Aorta (tissue), 5 donors: ENCODE measurements at regions of chr2 and their contacts with region 1.

Region 1: DNA sequence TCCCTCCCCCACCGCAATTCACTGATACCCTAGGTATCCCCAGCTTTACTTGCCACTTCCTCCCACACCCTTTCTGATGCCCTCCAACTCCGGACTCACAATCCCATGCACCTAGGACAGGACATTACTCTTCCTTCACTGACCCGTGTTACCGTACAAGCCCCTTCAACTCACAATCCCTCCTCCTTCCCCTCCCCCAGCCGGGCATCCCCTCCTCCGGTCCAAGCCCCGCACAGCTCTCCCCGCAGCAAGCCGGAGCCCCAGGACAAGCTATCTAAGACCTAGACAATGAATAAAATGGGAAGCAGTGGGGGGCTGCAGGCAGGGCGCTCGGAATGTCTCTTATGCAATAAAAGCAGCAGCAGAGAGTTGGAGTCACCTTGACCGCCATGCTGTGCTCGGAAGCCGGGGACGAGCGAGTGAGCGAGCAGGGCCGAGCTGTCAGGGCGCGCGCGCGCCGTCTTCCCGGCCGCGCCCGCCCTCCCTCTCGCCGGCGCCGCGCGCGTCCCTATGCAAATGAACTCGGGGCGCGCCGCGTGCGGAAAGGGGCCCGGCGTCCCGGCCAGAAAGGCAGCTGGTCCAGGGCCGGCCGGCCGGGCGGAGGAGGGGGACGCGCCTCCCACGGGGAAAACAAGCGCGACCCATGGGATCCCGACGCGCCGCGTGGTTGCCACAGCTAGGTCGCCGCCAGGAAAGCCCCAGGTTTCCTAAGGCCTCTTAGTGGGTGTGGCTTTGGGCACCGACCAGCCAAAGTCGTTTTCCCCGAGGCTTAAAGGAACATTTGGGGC is at the start of gene SLC25A12:
- DNase-seq: peak; percentile 87 to 94
- ATAC-seq: peak; percentile 97
- H3K4me3 ChIP-seq: peak within 1 kb of the TSS; percentile 75 to 78
- H3K27ac ChIP-seq: peak within 1 kb of the TSS in 1 of 2 donors; percentile 53
- H3K4me1 ChIP-seq: no peaks in the 10 kb centered on the region
- H3K27me3 ChIP-seq: no peaks in the 10 kb centered on the region
- total RNA-seq, gene SLC25A12: 24.1 to 34.6 TPM

Region 2: DNA sequence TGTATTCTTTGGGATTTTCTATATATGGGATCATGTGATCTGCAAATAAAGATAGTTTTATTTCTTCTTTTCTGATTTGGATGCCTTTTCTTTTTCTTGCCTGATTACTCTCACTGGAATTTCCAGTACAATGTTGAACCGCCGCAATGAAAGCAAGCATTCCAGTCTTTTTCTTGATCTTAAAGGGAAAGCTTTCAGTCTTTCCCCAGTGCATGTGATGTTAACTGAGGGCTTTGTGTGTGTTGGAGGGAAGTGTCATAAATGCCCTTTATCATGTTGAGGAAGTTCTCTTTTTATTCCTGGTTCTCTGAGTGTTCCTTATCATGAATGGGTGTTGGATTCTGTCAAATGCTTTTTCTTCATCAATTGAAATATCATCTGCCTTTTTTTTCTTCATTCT is 388.6 kb before region 1 on chr2:
- intact Hi-C with region 1: no loop called
- DNase-seq: no peak
- ATAC-seq: no peak
- H3K4me3 ChIP-seq: no peak overlapping the region
- H3K27ac ChIP-seq: no peak overlapping the region
- H3K4me1 ChIP-seq: no peaks in the 10 kb centered on the region
- H3K27me3 ChIP-seq: no peaks in the 10 kb centered on the region

Region 3: DNA sequence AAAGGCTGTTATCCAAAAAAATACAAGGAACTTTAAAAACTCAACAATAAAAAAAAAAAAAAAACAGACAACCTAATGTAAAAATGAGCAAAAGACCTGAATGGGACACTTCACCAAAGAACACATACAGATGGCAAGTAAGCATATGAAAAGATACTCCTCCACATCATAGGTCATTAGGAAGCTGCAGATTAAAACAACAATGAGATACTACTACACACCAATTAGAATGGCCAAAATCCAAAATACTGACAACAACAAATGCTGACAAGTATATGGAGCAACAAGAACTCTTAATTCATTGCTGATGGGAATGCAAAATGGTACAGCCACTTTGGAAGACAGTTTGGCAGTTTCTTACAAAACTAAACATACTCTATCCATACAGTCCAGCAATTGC is 122.6 kb before region 1 on chr2:
- intact Hi-C with region 1: no loop called
- DNase-seq: no peak
- ATAC-seq: no peak
- H3K4me3 ChIP-seq: no peak overlapping the region
- H3K27ac ChIP-seq: no peak overlapping the region
- H3K4me1 ChIP-seq: no peaks in the 10 kb centered on the region
- H3K27me3 ChIP-seq: no peaks in the 10 kb centered on the region

Region 4: GRCh38 chr2:171922230-171923022 is 28.4 kb after region 1 on chr2 and contains the start of gene HAT1:
- intact Hi-C with region 1: loop called in 1 of 2 experiments (anchors 2 kb)
- DNase-seq: peak; percentile 98
- ATAC-seq: peak; percentile 100
- H3K4me3 ChIP-seq: peak within 1 kb of the TSS; percentile 58 to 67
- H3K27ac ChIP-seq: peak within 1 kb of the TSS; percentile 1 to 86
- H3K4me1 ChIP-seq: no peaks in the 10 kb centered on the region
- H3K27me3 ChIP-seq: no peaks in the 10 kb centered on the region
- total RNA-seq, gene HAT1: 27.8 to 32.6 TPM

Region 5: GRCh38 chr2:172038604-172039003 is 144.6 kb after region 1 on chr2:
- intact Hi-C with region 1: no loop called
- DNase-seq: no peak
- ATAC-seq: no peak
- H3K4me3 ChIP-seq: no peak overlapping the region
- H3K27ac ChIP-seq: no peak overlapping the region
- H3K4me1 ChIP-seq: no peaks in the 10 kb centered on the region
- H3K27me3 ChIP-seq: no peaks in the 10 kb centered on the region